H1 (cell line): ENCODE measurements at regions of chr6 and their contacts with region 1.

Region 1: DNA sequence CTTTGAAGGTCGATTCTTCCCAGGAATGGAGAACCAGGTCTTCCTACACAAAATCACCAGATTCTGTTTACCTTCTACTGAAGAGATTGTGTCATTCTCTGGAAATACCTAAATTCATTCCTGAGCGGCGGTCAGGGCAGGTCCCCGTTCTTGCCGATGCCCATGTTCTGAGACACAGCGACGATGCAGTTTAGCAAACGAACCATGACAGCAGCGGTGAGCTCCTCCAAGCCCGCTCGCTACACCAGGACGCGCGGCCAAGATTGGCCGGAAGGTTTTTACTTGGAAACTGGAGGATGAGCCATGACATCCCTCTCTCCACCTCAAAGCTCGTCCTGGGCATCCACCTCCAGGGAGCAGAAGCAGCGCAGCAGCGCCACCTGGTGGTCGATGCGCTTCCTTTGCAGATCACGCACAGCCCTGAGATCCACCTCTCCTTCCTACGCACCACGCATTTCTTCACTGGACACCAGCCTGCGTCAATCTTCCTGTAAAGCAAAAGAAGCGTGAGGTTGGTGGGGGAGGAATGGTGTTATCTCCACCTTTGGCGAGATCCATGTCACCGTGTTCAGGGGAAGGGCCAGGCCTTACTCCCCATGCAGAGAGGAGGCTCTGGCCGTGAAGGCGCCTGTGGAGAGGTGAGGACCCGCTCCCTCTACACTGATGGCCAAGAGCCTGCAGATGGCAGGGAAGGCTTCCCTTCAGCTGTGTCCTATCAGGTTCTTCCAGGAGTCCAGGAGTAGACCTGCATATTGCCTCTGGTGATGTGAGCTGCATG is 9.9 kb upstream of the HLA-B start:
- DNase-seq: peak; percentile 86 to 91
- H3K4me3 ChIP-seq: peak overlapping the region in 2 of 4 experiments; percentile 30 to 45; a peak in 4 of 8 replicates
- H3K27ac ChIP-seq: no peak overlapping the region
- H3K4me1 ChIP-seq: no peaks in the 10 kb centered on the region; a peak in 1 of 7 replicates
- H3K27me3 ChIP-seq: no peaks in the 10 kb centered on the region; a peak in 2 of 7 replicates
- CTCF ChIP-seq: peak; percentile 96 to 99 (median 98)
- EP300 ChIP-seq: no peak
- POLR2A ChIP-seq: no peak
- RAD21 ChIP-seq: peak; percentile 97

Region 2: DNA sequence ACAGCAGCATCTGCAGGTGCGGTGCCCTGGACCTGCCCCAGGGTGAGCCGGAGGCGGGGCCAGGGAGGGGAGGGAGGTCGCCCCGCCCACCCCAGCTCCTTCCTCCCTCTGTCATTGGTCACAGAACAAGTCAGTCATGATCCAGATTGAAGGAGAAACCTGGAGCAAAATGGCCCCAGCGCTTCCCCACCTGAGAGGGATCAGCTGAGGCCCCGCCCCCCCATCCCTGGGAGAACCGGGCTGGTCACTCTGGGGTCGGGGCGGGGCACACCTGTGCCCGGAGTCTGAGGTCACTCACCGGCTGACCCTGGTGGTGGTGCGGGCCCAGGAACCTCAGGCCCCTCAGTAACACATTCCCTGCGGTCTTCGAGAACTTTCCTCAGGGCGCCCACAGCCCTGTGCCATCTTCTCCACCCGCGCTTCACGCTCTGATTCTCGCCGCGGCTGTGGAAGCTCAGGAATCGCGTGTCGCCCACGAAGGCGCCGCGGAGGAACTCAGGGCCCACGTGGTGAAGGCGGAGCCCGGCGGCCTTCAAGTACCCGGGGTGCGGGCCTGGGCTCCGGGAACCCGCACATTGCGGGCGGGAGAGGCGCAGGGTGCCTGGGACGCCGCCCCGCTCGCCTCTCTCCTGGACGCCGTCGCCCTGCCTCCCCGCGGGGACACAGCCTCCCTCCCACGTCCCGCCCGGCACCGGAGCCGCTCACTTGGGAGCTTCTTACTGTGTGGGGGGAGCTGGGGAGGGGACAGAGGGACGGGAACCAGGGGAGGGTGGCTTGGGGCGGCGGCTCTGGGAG is 58.6 kb before region 1 on chr6:
- CTCF ChIA-PET with region 1: interaction called, 13 read pairs
- POLR2A ChIA-PET with region 1: interaction called, 4 read pairs
- DNase-seq: peak; percentile 66 to 84
- H3K4me3 ChIP-seq: peak overlapping the region; percentile 38 to 73 (median 44)
- H3K27ac ChIP-seq: no peak overlapping the region
- H3K4me1 ChIP-seq: peaks cover 0 to 2% (median 0%) of the 10 kb centered on the region in 4 experiments; a peak in 3 of 7 replicates
- H3K27me3 ChIP-seq: peaks cover 0 to 7% (median 4%) of the 10 kb centered on the region in 4 experiments; a peak in 4 of 7 replicates
- CTCF ChIP-seq: no peak
- EP300 ChIP-seq: no peak
- POLR2A ChIP-seq: 0 out of 3 replicates have a peak, but pooled peaks of 1 of the 2 experiments have one; percentile 23
- RAD21 ChIP-seq: no peak

Region 3: DNA sequence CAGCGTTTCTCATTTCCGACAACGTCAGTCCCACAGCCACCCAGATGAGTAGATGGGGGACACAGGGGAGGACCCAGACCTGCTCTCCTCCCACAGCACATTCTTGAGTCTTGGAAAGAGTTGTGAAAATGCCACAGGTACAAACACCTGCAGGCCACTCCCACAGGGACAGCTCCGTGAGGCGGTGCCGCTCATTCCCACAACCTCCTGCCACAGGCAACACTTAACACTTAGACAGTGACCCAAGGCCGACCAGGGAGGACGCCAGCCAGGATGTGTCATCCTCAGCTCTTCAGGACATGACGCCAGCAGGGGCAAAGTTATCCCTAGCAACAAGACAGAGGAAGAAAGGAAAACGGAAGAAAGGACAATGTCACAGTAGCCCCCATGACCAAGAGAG is 13.0 kb after region 1 on chr6:
- CTCF ChIA-PET with region 1: interaction called, 27 read pairs
- POLR2A ChIA-PET with region 1: no interaction called
- DNase-seq: no peak
- H3K4me3 ChIP-seq: no peak overlapping the region
- H3K27ac ChIP-seq: no peak overlapping the region
- H3K4me1 ChIP-seq: no peaks in the 10 kb centered on the region
- H3K27me3 ChIP-seq: peaks cover 0 to 3% (median 0%) of the 10 kb centered on the region in 4 experiments; a peak in 1 of 7 replicates
- CTCF ChIP-seq: no peak
- EP300 ChIP-seq: no peak
- POLR2A ChIP-seq: no peak
- RAD21 ChIP-seq: no peak

Region 4: DNA sequence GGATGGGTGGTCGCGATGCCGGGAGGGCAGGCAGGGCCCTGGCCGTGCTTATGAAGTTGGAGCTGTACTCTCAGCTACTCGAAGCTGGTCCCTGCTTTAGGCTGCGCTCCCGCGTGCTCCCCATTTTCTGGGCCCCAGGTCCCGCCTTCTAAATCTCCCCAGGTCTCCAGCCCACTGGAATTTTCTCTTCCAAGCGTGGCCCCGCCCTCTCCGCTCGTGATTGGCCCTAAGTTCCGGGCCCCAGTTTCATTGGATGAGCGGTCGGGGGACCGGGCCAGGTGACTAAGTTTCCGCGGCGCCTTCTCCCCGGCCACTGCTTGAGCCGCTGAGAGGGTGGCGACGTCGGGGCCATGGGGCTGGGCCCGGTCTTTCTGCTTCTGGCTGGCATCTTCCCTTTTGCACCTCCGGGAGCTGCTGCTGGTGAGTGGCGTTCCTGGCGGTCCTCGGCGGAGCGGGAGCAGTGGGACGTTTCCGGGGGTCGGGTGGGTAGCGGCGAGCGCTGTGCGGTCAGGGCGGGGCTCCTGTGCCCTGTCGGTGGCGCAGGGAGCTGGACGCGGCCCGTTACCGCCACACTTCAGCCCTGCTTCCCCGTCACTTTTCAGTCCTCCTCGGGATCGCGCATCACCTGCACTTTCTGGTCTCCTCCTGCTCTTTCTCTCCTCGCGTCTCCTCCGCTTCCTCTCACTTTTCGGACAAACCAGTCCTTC is 36.6 kb after region 1 on chr6 and contains the start of gene MICA:
- CTCF ChIA-PET with region 1: no interaction called
- POLR2A ChIA-PET with region 1: no interaction called
- DNase-seq: peak; percentile 74 to 94
- H3K4me3 ChIP-seq: peak within 1 kb of the TSS; percentile 59 to 81 (median 70)
- H3K27ac ChIP-seq: no peak within 1 kb of the TSS
- H3K4me1 ChIP-seq: peaks cover 2 to 14% (median 5%) of the 10 kb centered on the region in 4 experiments
- H3K27me3 ChIP-seq: peaks cover 0 to 10% (median 4%) of the 10 kb centered on the region in 4 experiments; a peak in 3 of 7 replicates
- CTCF ChIP-seq: 0 out of 4 replicates have a peak, but pooled peaks of 1 of the 3 experiments have one; percentile 4
- EP300 ChIP-seq: no peak
- POLR2A ChIP-seq: peak in 1 of 2 experiments; percentile 80; a peak in 2 of 3 replicates
- RAD21 ChIP-seq: no peak
- total RNA-seq, gene MICA: 11.3 and 12.5 TPM in 2 replicates